Posterior cingulate gyrus (tissue), 11 donors: ENCODE measurements at regions of chr16 and their contacts with region 1.

Region 1: GRCh38 chr16:30902029-30902972 is 5.9 kb downstream of the CTF1 start:
- DNase-seq: peak in 9 of 10 donors; percentile 37 to 94 (median 61)

Region 2: DNA sequence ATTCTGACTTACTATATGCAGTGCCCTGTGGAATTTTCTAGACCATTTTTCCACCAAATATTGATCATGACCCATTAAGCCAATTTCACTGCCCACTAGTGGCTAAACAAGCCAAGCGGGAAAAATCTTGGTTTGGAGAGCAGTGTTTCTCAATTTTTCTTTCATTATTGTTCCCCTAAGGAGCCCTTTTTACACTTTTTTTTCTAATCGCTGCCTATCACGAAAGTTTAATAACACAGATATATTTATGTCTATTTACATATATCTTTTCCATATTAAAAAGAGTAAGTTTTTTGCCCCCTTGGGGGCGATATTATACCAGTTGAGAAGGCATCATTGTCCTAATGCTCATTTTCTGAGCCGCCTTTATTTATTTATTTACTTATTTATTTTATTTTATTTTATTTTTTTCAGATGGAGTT is 860.4 kb before region 1 on chr16:
- intact Hi-C with region 1: no loop called
- DNase-seq: no peak

Region 3: DNA sequence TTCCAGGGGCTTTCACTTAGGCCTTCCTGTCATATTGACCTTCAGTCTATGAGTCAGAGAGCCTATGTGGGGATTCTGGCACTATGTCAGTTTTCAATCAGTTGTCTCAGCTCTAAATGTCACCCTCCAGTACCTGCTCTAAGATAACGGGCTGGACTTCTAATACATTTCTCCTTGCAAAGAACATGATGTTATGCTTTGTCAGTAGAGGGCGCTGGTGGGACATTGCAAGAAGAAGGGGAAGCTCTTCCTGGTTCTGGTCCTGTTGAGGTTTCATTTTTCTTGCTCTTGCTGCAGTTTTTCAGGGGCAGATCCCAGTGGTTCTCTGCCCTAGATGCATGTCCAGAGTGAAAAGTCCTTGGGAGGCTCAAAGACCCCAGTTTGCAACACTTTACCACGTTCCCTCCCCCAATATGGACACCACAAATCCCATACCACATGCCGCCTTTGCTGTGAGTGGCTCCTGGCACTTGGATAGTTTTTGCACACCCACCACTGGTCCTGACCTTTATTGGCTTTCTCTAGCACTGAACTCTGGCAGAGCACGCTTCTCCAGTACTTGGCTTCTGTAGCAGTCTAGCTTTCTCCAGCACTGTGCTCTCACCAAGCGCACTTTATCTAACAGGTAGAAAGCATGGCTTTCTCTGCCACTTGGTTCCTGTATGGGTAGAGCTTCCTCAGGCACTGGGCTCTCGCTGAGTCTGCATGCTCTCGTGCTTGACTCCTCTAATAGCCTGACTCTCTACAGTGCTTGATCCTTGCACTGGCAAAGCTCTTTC is 57.4 kb before region 1 on chr16:
- intact Hi-C with region 1: loop called (anchors 10 kb)
- DNase-seq: peak in 5 of 10 donors; percentile 38 to 67 (median 51)

Region 4: DNA sequence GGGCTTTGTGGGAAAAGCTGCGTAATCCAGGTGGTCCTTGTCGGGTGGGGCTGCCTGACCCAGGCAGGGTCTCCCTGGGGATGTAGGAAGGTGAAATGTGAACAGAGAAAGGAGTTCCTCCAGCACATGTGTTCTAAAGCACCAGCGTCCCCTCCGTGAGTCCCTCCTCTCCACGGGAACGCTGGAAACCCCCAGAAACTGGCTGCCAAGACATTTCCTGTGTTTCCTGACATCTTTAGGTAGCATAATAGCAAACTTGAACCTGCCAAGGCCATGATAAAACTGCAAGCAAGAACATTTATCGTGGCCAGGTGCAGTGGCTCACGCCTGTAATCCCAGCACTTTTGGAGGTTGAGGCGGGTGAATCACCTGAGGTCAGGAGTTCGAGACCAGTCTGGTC is 327.2 kb after region 1 on chr16:
- intact Hi-C with region 1: no loop called
- DNase-seq: peak in 2 of 10 donors; percentile 29 to 64